ENCODE measurements at regions of chrX and their contacts with region 1.

Region 1: GRCh38 chrX:24054182-24055042 is at the start of gene EIF2S3:
- DNase-seq: peak; percentile 90
- ATAC-seq: peak; percentile 87
- H3K4me3 Mint-ChIP-seq: no peak within 1 kb of the TSS
- H3K27ac Mint-ChIP-seq: no peak within 1 kb of the TSS
- H3K4me1 Mint-ChIP-seq: peaks cover 15% of the 10 kb centered on the region
- H3K27me3 Mint-ChIP-seq: no peaks in the 10 kb centered on the region
- total RNA-seq, gene EIF2S3: 179 to 204 TPM

Region 2: GRCh38 chrX:23782863-23783568 is 271.4 kb before region 1 on chrX and contains the start of gene SAT1:
- CTCF ChIA-PET with region 1: interaction called, 12 read pairs
- DNase-seq: peak; percentile 96
- ATAC-seq: peak; percentile 86
- H3K4me3 Mint-ChIP-seq: peak within 1 kb of the TSS; percentile 92
- H3K27ac Mint-ChIP-seq: peak within 1 kb of the TSS; percentile 97
- H3K4me1 Mint-ChIP-seq: peaks cover 33% of the 10 kb centered on the region
- H3K27me3 Mint-ChIP-seq: no peaks in the 10 kb centered on the region
- total RNA-seq, gene SAT1: 96.1 to 204 TPM

Region 3: GRCh38 chrX:23854945-23855344 is 199.5 kb before region 1 on chrX:
- CTCF ChIA-PET with region 1: no interaction called
- DNase-seq: no peak
- ATAC-seq: no peak
- H3K4me3 Mint-ChIP-seq: no peak overlapping the region
- H3K27ac Mint-ChIP-seq: no peak overlapping the region
- H3K4me1 Mint-ChIP-seq: no peaks in the 10 kb centered on the region
- H3K27me3 Mint-ChIP-seq: no peaks in the 10 kb centered on the region

Region 4: DNA sequence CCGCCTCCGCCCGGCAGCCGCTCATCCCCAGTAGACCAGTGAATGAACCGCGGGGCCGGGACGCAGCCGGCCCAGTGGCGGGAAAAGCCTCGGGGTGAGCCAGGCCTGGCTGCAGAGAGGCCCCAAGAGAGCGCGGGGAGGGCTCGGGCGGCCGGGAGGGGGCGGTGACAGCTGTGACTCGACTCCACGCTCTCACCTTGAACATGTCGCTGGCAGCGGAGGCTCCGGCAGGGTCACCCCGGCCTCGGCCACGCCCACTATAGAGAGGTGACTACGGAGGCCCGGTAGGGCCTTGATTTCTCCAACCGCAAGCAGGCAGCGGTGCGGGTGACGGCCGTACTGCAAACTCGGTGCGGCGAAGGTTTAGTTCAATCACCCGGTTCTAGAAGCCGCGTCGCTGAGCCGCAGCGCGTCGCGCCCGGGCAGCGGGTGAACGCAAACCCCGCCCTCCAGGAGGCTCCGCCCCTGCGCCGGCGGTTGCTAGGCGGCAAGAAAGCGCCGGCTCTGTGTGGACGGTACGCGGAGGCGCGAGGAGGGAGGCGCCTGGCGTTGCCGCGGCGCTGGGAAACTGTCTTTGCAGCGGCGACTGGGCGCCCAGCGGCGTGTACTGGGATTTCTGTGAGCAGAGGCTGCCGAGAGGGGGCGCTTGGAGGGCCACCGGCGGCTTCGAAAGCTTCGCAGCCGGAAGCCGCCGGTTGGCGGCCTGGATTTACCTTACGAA is 146.8 kb before region 1 on chrX and contains the starts of genes APOO and CXorf58:
- CTCF ChIA-PET with region 1: interaction called, 33 read pairs
- DNase-seq: peak; percentile 94
- ATAC-seq: peak; percentile 96
- H3K4me3 Mint-ChIP-seq: peak within 1 kb of the TSS; percentile 75
- H3K27ac Mint-ChIP-seq: peak within 1 kb of the TSS; percentile 87
- H3K4me1 Mint-ChIP-seq: peaks cover 26% of the 10 kb centered on the region
- H3K27me3 Mint-ChIP-seq: no peaks in the 10 kb centered on the region
- total RNA-seq, gene APOO: 27.1 to 27.5 TPM
- total RNA-seq, gene CXorf58: 0.20 TPM in 1 of 2 experiments, not detected in the other

Region 5: GRCh38 chrX:24024819-24025740 is 29.3 kb before region 1 on chrX:
- CTCF ChIA-PET with region 1: interaction called, 39 read pairs
- DNase-seq: peak; percentile 92
- ATAC-seq: peak; percentile 91
- H3K4me3 Mint-ChIP-seq: peak overlapping the region; percentile 86
- H3K27ac Mint-ChIP-seq: peak overlapping the region; percentile 90
- H3K4me1 Mint-ChIP-seq: peaks cover 25% of the 10 kb centered on the region
- H3K27me3 Mint-ChIP-seq: peaks cover 5% of the 10 kb centered on the region

Region 6: GRCh38 chrX:24124244-24124799 is 69.9 kb after region 1 on chrX:
- CTCF ChIA-PET with region 1: no interaction called
- DNase-seq: no peak
- ATAC-seq: no peak
- H3K4me3 Mint-ChIP-seq: no peak overlapping the region
- H3K27ac Mint-ChIP-seq: no peak overlapping the region
- H3K4me1 Mint-ChIP-seq: no peaks in the 10 kb centered on the region
- H3K27me3 Mint-ChIP-seq: no peaks in the 10 kb centered on the region

Region 7: GRCh38 chrX:24207826-24208225 is 153.4 kb after region 1 on chrX:
- CTCF ChIA-PET with region 1: no interaction called
- DNase-seq: no peak
- ATAC-seq: no peak
- H3K4me3 Mint-ChIP-seq: no peak overlapping the region
- H3K27ac Mint-ChIP-seq: no peak overlapping the region
- H3K4me1 Mint-ChIP-seq: peaks cover 14% of the 10 kb centered on the region
- H3K27me3 Mint-ChIP-seq: no peaks in the 10 kb centered on the region

Measured in activated CD8-positive, alpha-beta memory T cell treated with anti-CD3 and anti-CD28 coated beads, Interleukin-2, amount 10 ng/mL, durations not matched to agents 7 days and 5 days (primary cell).